Astrocyte of the cerebellum (primary cell): ENCODE measurements at regions of chr9 and their contacts with region 1.

Region 1: GRCh38 chr9:19379697-19380046 is 364 bp downstream of the RPS6 start:
- DNase-seq: peak; percentile 22
- H3K4me3 ChIP-seq: peak overlapping the region; percentile 87
- CTCF ChIP-seq: no peak

Region 2: GRCh38 chr9:19303216-19303615 is 76.5 kb before region 1 on chr9:
- in situ Hi-C with region 1: loop called (anchors 5 kb)
- DNase-seq: no peak
- H3K4me3 ChIP-seq: no peak overlapping the region
- CTCF ChIP-seq: no peak